Activated T-helper 2 cell treated with anti-CD3 and anti-CD28 coated beads, Interferon-gamma antibody, Interleukin-2, Interleukin-4, amounts not matched to agents 10 μg/mL and 5 μg/mL and 100 μg/mL, durations not matched to agents 14 hours and 24 hours and 36 hours (primary cell): ENCODE measurements at regions of chr11 and their contacts with region 1.

Region 1: GRCh38 chr11:88357323-88358039 is 19.9 kb upstream of the CTSC start:
- DNase-seq: no peak
- H3K4me3 Mint-ChIP-seq: peak overlapping the region; percentile 28
- H3K27ac Mint-ChIP-seq: peak overlapping the region; percentile 74
- H3K4me1 Mint-ChIP-seq: peaks cover 44% of the 10 kb centered on the region
- H3K27me3 Mint-ChIP-seq: no peaks in the 10 kb centered on the region

Region 2: GRCh38 chr11:88174709-88175568 is 182.5 kb before region 1 on chr11 and contains the start of gene RAB38:
- intact Hi-C with region 1: loop called (anchors 2 kb)
- DNase-seq: peak; percentile 20
- H3K4me3 Mint-ChIP-seq: peak within 1 kb of the TSS; percentile 72
- H3K27ac Mint-ChIP-seq: peak within 1 kb of the TSS; percentile 47
- H3K4me1 Mint-ChIP-seq: peaks cover 45% of the 10 kb centered on the region
- H3K27me3 Mint-ChIP-seq: peaks cover 15% of the 10 kb centered on the region
- total RNA-seq, gene RAB38: 2.0 and 2.3 TPM in 2 replicates

Region 3: GRCh38 chr11:88337181-88337986 is 20.1 kb before region 1 on chr11 and contains the start of gene CTSC:
- intact Hi-C with region 1: loop called (anchors 1 kb)
- DNase-seq: peak; percentile 91
- H3K4me3 Mint-ChIP-seq: peak within 1 kb of the TSS; percentile 96
- H3K27ac Mint-ChIP-seq: peak within 1 kb of the TSS; percentile 96
- H3K4me1 Mint-ChIP-seq: peaks cover 58% of the 10 kb centered on the region
- H3K27me3 Mint-ChIP-seq: no peaks in the 10 kb centered on the region
- total RNA-seq, gene CTSC: 82.4 and 82.6 TPM in 2 replicates

Region 4: GRCh38 chr11:88402192-88402715 is 44.8 kb after region 1 on chr11:
- intact Hi-C with region 1: loop called (anchors 5 kb)
- DNase-seq: no peak
- H3K4me3 Mint-ChIP-seq: no peak overlapping the region
- H3K27ac Mint-ChIP-seq: peak overlapping the region; percentile 1
- H3K4me1 Mint-ChIP-seq: peaks cover 31% of the 10 kb centered on the region
- H3K27me3 Mint-ChIP-seq: no peaks in the 10 kb centered on the region

Region 5: GRCh38 chr11:88421530-88421929 is 64.0 kb after region 1 on chr11:
- intact Hi-C with region 1: loop called (anchors 1 kb)
- DNase-seq: peak; percentile 24
- H3K4me3 Mint-ChIP-seq: peak overlapping the region; percentile 66
- H3K27ac Mint-ChIP-seq: peak overlapping the region; percentile 87
- H3K4me1 Mint-ChIP-seq: peaks cover 62% of the 10 kb centered on the region
- H3K27me3 Mint-ChIP-seq: no peaks in the 10 kb centered on the region